Heart right ventricle (tissue), 16 donors: ENCODE measurements at regions of chr5 and their contacts with region 1.

Region 1: GRCh38 chr5:102762095-102762534 is 7.0 kb downstream of the PAM start:
- DNase-seq: no peak
- ATAC-seq: peak in 3 of 8 donors; percentile 28 to 38 (median 33)
- H3K4me3 ChIP-seq: peak overlapping the region in 3 of 10 donors; percentile 5 to 20 (median 11)
- H3K27ac ChIP-seq: peak overlapping the region in 8 of 10 donors; percentile 19 to 68 (median 42)
- H3K4me1 ChIP-seq: peaks cover 0 to 72% (median 63%) of the 10 kb centered on the region in 9 donors
- H3K27me3 ChIP-seq: no peaks in the 10 kb centered on the region
- CTCF ChIP-seq: no peak

Region 2: DNA sequence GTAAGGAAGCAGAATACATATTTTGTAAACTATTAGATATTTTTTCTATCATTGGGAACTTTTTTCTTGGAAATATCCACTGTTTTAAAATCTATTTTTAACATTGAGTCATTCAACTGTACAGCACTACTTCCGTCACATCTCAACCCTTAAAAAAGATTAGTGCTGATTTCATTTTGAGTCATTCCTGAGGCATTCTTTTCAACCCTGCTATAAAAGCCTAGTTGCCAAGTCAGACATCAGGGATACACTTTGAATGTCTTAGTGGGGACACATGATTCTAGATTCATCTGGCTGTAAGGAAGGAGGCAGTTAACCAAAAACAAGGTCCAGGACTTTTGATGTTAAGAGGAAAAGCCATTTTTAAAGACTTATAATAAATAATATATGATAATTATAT is 196.9 kb after region 1 on chr5:
- intact Hi-C with region 1: loop called in 1 of 10 experiments (anchors 5 kb)
- DNase-seq: no peak
- ATAC-seq: peak; percentile 42 to 87 (median 75)
- H3K4me3 ChIP-seq: no peak overlapping the region
- H3K27ac ChIP-seq: peak overlapping the region in 8 of 10 donors; percentile 40 to 73 (median 60)
- H3K4me1 ChIP-seq: peaks cover 0 to 21% (median 17%) of the 10 kb centered on the region in 9 donors
- H3K27me3 ChIP-seq: no peaks in the 10 kb centered on the region
- CTCF ChIP-seq: no peak

Region 3: GRCh38 chr5:103119765-103120606 is 357.9 kb after region 1 on chr5 and contains the starts of genes GIN1 and PPIP5K2:
- intact Hi-C with region 1: loop called in 1 of 10 experiments (anchors 10 kb)
- DNase-seq: peak; percentile 93 to 97
- ATAC-seq: peak; percentile 98 to 100 (median 99)
- H3K4me3 ChIP-seq: peak within 1 kb of the TSS; percentile 64 to 95 (median 78)
- H3K27ac ChIP-seq: peak within 1 kb of the TSS; percentile 88 to 97 (median 90)
- H3K4me1 ChIP-seq: peaks cover 0 to 42% (median 34%) of the 10 kb centered on the region in 9 donors
- H3K27me3 ChIP-seq: no peaks in the 10 kb centered on the region
- CTCF ChIP-seq: peak in 3 of 9 donors; percentile 4 to 17 (median 7)
- total RNA-seq, gene GIN1: 12.0 to 19.7 (median 13.7) TPM
- total RNA-seq, gene PPIP5K2: 30.8 to 72.9 (median 35.6) TPM